ENCODE measurements at regions of chr2 and their contacts with region 1.

Region 1: DNA sequence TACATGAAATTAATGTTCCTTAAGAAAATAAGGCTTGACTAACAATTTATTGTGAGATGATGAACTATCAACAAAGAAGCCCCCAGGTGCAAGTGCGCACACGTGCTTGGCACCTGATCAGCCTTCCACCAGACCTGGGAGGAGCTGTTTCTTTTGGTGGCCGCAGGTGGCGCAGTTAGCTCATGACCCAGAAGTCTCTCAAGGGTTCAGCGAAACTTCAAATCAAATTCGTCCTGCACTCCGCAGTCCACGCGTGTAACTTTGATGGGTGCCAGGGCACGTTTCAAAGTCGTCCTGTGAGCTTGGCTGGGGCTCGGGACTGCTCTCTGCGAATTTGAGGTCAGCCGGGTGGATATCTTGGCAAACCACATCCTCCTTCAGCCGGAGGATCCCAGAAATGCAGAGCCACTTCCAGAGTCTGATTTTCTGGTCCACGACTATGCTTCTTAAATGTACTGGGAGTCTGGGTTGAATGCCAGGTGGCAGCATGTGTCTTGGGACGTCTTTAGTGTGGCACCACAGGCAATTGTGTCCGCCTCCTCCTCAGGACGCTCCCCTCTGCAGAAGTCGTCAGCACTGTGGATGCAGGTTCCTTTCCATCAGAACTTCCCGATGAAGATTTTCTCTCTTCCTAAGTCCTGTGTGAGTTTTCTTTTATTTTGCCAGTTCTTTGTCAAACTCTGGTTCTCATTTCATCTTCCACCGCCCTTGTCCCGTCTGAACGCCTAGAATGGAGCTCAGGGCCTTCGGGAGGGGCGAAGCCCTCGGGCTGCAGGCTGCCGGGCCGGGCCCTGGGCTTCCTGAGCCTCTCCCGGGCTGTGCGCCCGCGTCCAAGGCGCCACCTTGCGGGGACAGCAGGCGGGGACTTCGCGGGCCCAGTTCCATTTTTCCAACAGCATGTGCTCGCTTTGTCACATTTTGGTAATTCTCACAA is 61.3 kb upstream of the RAPGEF4 start:
- DNase-seq: peak; percentile 81
- ATAC-seq: peak; percentile 100
- H3K4me3 Mint-ChIP-seq: peak overlapping the region; percentile 11
- H3K27ac Mint-ChIP-seq: no peak overlapping the region
- H3K4me1 Mint-ChIP-seq: peaks cover 8% of the 10 kb centered on the region
- H3K27me3 Mint-ChIP-seq: peaks cover 30% of the 10 kb centered on the region
- CTCF ChIP-seq: peak; percentile 50

Region 2: GRCh38 chr2:172128484-172128883 is 545.8 kb before region 1 on chr2:
- CTCF ChIA-PET with region 1: interaction called, 16 read pairs
- POLR2A ChIA-PET with region 1: no interaction called
- DNase-seq: no peak
- ATAC-seq: no peak
- H3K4me3 Mint-ChIP-seq: no peak overlapping the region
- H3K27ac Mint-ChIP-seq: no peak overlapping the region
- H3K4me1 Mint-ChIP-seq: peaks cover 27% of the 10 kb centered on the region
- H3K27me3 Mint-ChIP-seq: peaks cover 51% of the 10 kb centered on the region
- CTCF ChIP-seq: no peak

Region 3: GRCh38 chr2:172533687-172534086 is 140.6 kb before region 1 on chr2:
- CTCF ChIA-PET with region 1: interaction called, 11 read pairs
- POLR2A ChIA-PET with region 1: no interaction called
- DNase-seq: no peak
- ATAC-seq: no peak; the same call in 1 of the 2 replicates
- H3K4me3 Mint-ChIP-seq: no peak overlapping the region
- H3K27ac Mint-ChIP-seq: peak overlapping the region; percentile 62; the same call in 1 of the 2 replicates
- H3K4me1 Mint-ChIP-seq: peaks cover 36% of the 10 kb centered on the region
- H3K27me3 Mint-ChIP-seq: peaks cover 8% of the 10 kb centered on the region; the same call in 1 of the 2 replicates
- CTCF ChIP-seq: no peak

Region 4: GRCh38 chr2:172596776-172597175 is 77.5 kb before region 1 on chr2:
- CTCF ChIA-PET with region 1: interaction called, 57 read pairs
- POLR2A ChIA-PET with region 1: no interaction called
- DNase-seq: no peak
- ATAC-seq: no peak
- H3K4me3 Mint-ChIP-seq: no peak overlapping the region
- H3K27ac Mint-ChIP-seq: no peak overlapping the region
- H3K4me1 Mint-ChIP-seq: peaks cover 16% of the 10 kb centered on the region
- H3K27me3 Mint-ChIP-seq: no peaks in the 10 kb centered on the region
- CTCF ChIP-seq: no peak

Region 5: DNA sequence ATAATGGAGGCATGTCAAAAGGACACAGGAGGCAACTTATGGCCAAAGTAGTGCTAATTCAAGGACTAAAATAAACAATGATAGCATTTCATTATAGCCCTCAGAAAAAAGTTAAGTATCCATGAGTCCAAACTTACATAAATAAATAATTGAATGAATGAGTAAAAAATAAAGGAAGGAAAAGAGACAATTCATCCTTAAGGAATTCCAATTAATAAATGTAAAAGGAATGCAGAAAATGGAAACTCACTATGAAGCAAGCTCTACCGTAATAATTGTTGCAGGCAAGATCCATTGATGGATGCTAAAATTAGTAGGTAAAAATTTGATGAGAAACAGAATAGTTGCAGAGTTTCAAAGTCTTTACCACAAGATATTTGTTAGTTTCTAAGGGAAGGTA is 26.9 kb before region 1 on chr2:
- CTCF ChIA-PET with region 1: interaction called, 10 read pairs
- POLR2A ChIA-PET with region 1: no interaction called
- DNase-seq: no peak
- ATAC-seq: no peak
- H3K4me3 Mint-ChIP-seq: no peak overlapping the region
- H3K27ac Mint-ChIP-seq: no peak overlapping the region
- H3K4me1 Mint-ChIP-seq: peaks cover 6% of the 10 kb centered on the region
- H3K27me3 Mint-ChIP-seq: peaks cover 10% of the 10 kb centered on the region; the same call in 1 of the 2 replicates
- CTCF ChIP-seq: no peak

Region 6: GRCh38 chr2:172685467-172685866 is 11.2 kb after region 1 on chr2:
- CTCF ChIA-PET with region 1: interaction called, 29 read pairs
- POLR2A ChIA-PET with region 1: no interaction called
- DNase-seq: no peak
- ATAC-seq: no peak
- H3K4me3 Mint-ChIP-seq: no peak overlapping the region
- H3K27ac Mint-ChIP-seq: no peak overlapping the region
- H3K4me1 Mint-ChIP-seq: no peaks in the 10 kb centered on the region
- H3K27me3 Mint-ChIP-seq: no peaks in the 10 kb centered on the region; the same call in 1 of the 2 replicates
- CTCF ChIP-seq: no peak